Activated naive CD4-positive, alpha-beta T cell treated with anti-CD3 and anti-CD28 coated beads, Interleukin-2, amount 10 ng/mL, durations not matched to agents 7 days and 5 days (primary cell): ENCODE measurements at regions of chr9 and their contacts with region 1.

Region 1: GRCh38 chr9:94681508-94681907 is 42.2 kb upstream of the FBP1 start:
- DNase-seq: peak; percentile 69
- H3K4me3 Mint-ChIP-seq: no peak overlapping the region
- H3K27ac Mint-ChIP-seq: no peak overlapping the region
- H3K4me1 Mint-ChIP-seq: no peaks in the 10 kb centered on the region
- H3K27me3 Mint-ChIP-seq: peaks cover 28% of the 10 kb centered on the region

Region 2: GRCh38 chr9:94630281-94631232 is 51.0 kb before region 1 on chr9:
- CTCF ChIA-PET with region 1: no interaction called
- DNase-seq: no peak
- H3K4me3 Mint-ChIP-seq: no peak overlapping the region
- H3K27ac Mint-ChIP-seq: no peak overlapping the region
- H3K4me1 Mint-ChIP-seq: peaks cover 2% of the 10 kb centered on the region
- H3K27me3 Mint-ChIP-seq: peaks cover 23% of the 10 kb centered on the region

Region 3: DNA sequence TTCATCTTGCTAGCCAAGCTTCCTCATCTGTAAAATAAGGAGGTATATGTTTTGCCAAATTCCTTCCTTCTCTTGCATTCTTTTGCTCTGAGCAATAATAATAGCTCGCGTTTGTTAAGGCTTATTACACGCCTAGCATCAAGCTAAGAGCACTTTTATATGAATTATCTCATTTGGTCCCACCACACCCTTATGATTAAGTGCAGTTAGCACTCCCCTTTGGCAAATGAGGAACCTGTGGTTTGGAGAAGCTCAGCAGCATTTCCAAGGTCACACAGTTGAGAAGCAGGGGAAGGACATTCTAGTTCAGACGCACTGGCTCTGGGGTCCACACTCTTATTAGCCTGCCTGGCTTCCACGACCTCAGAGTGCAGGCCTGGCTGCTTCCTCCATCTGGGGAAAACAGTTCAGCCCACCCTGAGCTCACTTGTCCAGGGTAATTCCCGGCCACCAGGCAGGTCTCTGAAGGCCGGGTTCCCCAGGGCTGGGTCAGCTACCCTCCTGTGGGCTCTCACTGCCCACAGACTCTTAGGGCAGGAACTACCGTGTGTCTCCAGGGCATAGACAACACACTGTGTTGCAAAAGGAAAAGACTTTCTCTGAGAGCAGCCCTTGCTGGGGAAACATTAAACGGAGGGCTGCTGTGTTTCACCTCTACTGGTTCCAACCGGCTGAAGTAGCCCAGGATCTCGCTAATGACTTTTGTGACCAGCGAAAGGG is 32.2 kb before region 1 on chr9:
- CTCF ChIA-PET with region 1: no interaction called
- DNase-seq: no peak
- H3K4me3 Mint-ChIP-seq: no peak overlapping the region
- H3K27ac Mint-ChIP-seq: no peak overlapping the region
- H3K4me1 Mint-ChIP-seq: no peaks in the 10 kb centered on the region
- H3K27me3 Mint-ChIP-seq: peaks cover 39% of the 10 kb centered on the region

Region 4: DNA sequence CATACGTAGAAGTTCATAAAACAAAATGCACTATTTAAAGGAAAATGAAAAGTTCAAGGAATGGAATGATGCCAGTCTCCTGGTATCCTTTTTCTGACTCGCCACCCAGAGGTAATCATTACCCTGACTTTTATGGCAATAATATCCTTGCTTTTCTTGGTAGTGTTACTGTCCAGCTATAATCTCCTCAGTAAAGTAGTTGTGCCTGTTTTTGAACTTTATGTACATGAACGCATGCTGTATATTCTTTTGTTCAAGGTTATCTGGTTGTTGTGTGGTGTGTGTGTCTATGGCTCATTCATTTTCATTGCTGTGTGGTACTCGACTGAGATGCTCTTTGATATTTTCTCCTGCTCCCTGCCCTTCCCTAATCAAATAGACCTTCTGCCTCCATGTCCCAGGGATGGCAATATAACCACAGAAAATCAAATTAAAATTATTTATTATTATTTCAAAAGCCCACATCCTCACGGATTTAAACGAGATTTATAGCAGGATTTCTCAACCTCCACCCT is 13.0 kb before region 1 on chr9:
- CTCF ChIA-PET with region 1: interaction called, 27 read pairs
- DNase-seq: no peak
- H3K4me3 Mint-ChIP-seq: no peak overlapping the region
- H3K27ac Mint-ChIP-seq: no peak overlapping the region
- H3K4me1 Mint-ChIP-seq: peaks cover 17% of the 10 kb centered on the region
- H3K27me3 Mint-ChIP-seq: peaks cover 21% of the 10 kb centered on the region

Region 5: DNA sequence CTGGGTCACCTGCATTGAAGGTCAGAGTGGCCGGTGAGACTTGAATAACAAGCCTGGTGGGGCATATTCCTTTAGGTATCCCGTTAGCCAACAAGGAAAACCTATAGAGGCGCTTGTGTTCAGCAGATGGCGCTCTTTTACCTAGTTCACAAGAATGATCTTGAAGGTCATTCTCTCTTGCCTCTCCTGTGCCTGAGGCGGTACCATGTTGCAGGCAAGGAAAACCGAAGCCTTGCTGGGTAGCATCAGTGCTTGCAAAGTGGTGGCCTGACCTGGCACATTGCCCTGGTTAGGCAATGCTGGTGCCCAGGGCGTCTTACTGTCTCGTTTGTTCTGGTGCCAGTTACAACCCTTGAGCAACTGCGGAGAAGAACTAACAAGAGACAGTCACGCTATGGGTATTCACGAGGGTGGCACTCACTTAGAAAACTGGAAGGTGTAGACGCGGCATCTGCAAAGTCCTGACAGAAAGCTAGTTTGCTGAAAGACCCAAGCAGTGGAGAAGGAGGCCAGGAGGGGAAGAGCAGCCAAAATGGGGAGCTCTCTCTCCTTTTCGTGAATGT is 101.7 kb after region 1 on chr9:
- CTCF ChIA-PET with region 1: interaction called, 10 read pairs
- DNase-seq: peak; percentile 65
- H3K4me3 Mint-ChIP-seq: no peak overlapping the region
- H3K27ac Mint-ChIP-seq: no peak overlapping the region
- H3K4me1 Mint-ChIP-seq: peaks cover 7% of the 10 kb centered on the region
- H3K27me3 Mint-ChIP-seq: no peaks in the 10 kb centered on the region

Region 6: DNA sequence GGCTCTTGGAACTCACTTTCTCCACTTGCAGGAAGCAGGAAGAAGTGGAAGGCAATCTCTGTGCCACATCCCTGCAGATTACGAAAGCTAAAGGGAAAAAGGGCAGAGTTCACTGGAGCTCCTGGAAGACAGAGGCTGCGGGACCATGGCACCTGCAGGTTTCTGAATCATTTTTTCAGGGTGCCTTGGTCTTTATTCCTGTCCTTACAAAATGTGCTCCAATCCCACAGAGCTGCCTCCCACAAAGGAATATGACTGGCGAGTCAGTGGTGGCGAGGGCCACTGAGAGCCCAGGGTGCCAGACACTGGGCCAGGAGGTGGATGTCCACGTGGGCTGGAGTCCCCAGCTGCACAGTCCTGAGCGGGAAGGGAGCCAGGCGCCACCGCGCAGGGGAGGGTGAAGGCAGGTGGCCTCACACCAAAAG is 453.0 kb after region 1 on chr9:
- CTCF ChIA-PET with region 1: interaction called, 164 read pairs
- DNase-seq: no peak
- H3K4me3 Mint-ChIP-seq: no peak overlapping the region
- H3K27ac Mint-ChIP-seq: no peak overlapping the region
- H3K4me1 Mint-ChIP-seq: no peaks in the 10 kb centered on the region
- H3K27me3 Mint-ChIP-seq: peaks cover 4% of the 10 kb centered on the region

Region 7: DNA sequence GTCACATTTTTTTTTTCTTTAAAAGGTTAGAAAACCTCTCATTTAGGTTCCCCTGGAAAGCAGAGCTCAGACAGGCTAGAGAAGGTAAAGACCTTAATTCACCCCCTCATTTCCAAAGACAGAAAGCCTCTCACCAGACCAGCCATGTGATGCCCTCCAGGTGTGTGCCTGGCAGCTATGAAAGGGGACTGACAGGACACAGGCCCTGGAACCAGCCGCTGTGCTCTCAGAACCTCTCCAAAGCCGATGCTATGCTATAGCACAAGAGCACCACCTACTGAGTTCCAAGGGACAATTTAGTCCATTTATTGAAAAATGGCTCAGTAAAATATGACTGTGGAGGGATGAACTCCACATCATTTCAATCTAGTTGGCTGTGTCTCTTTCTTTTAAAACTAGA is 587.2 kb after region 1 on chr9:
- CTCF ChIA-PET with region 1: interaction called, 12 read pairs
- DNase-seq: peak; percentile 33
- H3K4me3 Mint-ChIP-seq: no peak overlapping the region
- H3K27ac Mint-ChIP-seq: no peak overlapping the region
- H3K4me1 Mint-ChIP-seq: peaks cover 52% of the 10 kb centered on the region
- H3K27me3 Mint-ChIP-seq: no peaks in the 10 kb centered on the region